ENCODE measurements at regions of chr7 and their contacts with region 1.

Region 1: DNA sequence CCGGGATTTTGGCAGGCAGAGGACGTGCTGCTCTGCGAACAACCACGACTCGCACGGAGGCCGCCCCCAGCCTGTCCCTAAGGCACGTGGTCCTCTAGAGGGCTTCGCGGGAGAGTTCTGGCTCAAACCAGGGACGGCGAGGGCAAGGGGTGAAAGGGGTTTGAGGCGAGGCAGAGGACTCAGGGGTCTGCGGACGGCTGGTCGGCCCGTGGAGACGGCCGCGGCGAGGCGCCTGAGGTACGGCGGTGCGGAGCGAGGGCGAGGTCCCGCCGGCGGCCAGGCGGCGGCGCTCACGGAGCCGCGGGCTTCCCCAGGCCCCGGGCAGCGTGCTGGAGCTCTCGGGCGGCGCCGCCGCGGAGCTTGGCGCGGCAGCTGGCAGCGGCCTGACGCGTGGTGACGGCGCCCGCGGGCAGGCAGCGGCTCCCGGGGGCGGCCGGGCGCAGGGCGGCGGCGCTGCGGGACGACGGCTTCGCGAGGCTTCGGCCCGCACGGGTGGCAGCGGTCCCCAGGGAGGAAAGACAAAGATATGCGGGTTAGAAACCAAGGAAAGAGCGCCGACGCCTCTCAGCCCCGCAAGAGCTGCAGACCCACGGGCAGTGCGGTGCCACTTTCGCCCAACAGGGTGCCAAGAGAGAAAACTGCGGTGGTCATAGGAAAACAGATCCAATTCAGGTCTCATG is 44.8 kb downstream of the ZNF800 start:
- DNase-seq: peak; percentile 77 to 87 (median 84)
- H3K4me3 ChIP-seq: peak overlapping the region; percentile 21 to 68 (median 53)
- H3K27ac ChIP-seq: no peak overlapping the region
- H3K4me1 ChIP-seq: peaks cover 3 to 7% (median 6%) of the 10 kb centered on the region in 4 experiments
- H3K27me3 ChIP-seq: peaks cover 2 to 11% (median 3%) of the 10 kb centered on the region in 5 experiments

Region 2: DNA sequence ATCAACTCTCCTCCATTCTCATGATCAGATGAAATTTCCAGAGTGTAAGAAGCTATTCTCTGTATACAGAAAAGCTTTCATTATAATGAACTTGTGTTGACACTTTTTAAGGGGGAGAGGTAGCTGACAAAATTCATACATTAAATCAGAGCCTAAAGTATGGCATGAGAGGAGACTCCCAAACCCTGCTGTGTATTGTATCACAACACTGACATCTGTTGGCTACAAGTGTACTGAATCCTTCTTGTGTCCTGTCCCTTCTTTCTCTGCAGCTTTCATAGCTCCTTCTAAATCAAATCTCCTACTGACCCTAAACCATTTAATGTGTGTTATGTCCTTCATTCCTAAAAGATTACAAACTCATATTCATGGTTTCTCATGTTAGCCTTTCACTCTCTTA is 166.8 kb after region 1 on chr7:
- CTCF ChIA-PET with region 1: interaction called, 11 read pairs
- POLR2A ChIA-PET with region 1: no interaction called
- DNase-seq: peak; percentile 33 to 63 (median 55)
- H3K4me3 ChIP-seq: no peak overlapping the region
- H3K27ac ChIP-seq: no peak overlapping the region
- H3K4me1 ChIP-seq: no peaks in the 10 kb centered on the region
- H3K27me3 ChIP-seq: peaks cover 0 to 26% (median 13%) of the 10 kb centered on the region in 5 experiments

Measured in common myeloid progenitor, CD34-positive (primary cell).